A549 (cell line): ENCODE measurements at regions of chr3 and their contacts with region 1.

Region 1: DNA sequence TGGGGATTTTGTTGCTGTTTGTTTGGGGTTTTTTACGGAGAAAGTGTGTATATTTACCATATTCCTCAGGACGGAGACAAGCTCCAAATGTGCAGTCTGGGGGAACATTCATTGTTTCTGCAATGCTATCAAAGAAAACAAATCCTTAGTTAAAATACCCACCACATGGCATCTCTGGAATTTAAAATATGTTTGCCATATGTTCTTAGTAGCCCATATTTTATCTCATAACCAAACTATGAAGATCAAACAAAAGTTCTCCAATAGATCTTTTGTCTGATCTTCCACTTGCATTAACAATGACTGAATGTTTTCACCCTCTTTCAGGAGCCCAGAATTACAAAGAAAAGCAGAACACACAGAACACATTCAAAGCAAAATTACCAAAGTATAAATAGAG is 35.3 kb downstream of the EFHB start:
- DNase-seq: no peak
- ATAC-seq: peak; percentile 36 to 74; a peak in 3 of 6 replicates
- H3K4me3 ChIP-seq: peak overlapping the region; percentile 8; the same call in 1 of the 3 replicates
- H3K27ac ChIP-seq: peak overlapping the region; percentile 69 to 81
- H3K4me1 ChIP-seq: peaks cover 43% of the 10 kb centered on the region
- CTCF ChIP-seq: no peak
- EP300 ChIP-seq: peak in 1 of 2 experiments; percentile 34; a peak in 1 of 5 replicates
- POLR2A ChIP-seq: no peak
- RAD21 ChIP-seq: peak in 1 of 2 experiments; percentile 12; a peak in 1 of 5 replicates

Region 2: DNA sequence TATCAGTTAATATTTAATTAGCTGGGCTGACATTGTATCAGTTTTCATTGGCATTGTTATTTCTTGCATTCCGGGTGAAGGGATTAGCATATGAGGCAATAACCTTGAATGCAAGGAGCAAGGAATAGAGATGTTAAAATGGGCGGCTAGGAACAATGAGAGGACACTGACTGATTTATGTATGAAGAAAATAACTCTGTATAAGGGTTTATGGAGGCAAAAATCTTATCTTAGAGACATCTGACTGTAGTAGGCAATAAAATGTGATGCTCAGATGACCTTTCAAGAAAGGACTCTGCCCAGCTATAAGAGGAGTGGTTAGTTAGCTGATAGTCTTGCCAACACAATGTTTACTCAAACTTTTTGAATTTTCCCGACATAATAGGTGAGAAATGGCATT is 123.0 kb before region 1 on chr3:
- CTCF ChIA-PET with region 1: no interaction called
- POLR2A ChIA-PET with region 1: no interaction called
- DNase-seq: no peak
- ATAC-seq: no peak
- H3K4me3 ChIP-seq: no peak overlapping the region
- H3K27ac ChIP-seq: no peak overlapping the region
- H3K4me1 ChIP-seq: no peaks in the 10 kb centered on the region
- CTCF ChIP-seq: no peak
- EP300 ChIP-seq: no peak
- POLR2A ChIP-seq: no peak
- RAD21 ChIP-seq: no peak

Region 3: DNA sequence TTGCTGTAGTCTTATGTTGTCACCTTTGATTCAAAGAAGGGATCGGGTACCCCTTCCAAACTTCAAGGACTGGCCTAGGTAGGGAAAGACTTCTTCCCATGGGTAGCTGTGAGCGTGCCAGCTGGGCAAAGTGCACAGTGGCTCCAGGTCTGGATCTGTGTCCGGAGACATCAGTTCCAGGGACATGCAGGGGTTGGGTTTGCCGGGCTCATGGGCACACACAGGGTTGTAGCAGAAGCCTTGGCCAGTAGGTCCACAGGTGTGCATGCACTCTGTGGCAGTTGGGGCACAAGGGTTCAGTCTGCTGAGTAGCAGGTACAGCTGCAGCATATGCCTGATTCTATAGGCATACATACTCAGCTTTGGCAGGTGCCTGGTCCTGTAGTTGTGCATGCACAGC is 75.9 kb before region 1 on chr3:
- CTCF ChIA-PET with region 1: no interaction called
- POLR2A ChIA-PET with region 1: no interaction called
- DNase-seq: no peak
- ATAC-seq: no peak
- H3K4me3 ChIP-seq: no peak overlapping the region
- H3K27ac ChIP-seq: no peak overlapping the region
- H3K4me1 ChIP-seq: no peaks in the 10 kb centered on the region
- CTCF ChIP-seq: no peak
- EP300 ChIP-seq: no peak
- POLR2A ChIP-seq: no peak
- RAD21 ChIP-seq: no peak

Region 4: GRCh38 chr3:19888428-19889152 is 10.1 kb before region 1 on chr3:
- CTCF ChIA-PET with region 1: interaction called, 12 read pairs
- POLR2A ChIA-PET with region 1: interaction called, 12 read pairs
- DNase-seq: peak in 1 of 2 experiments; percentile 19
- ATAC-seq: peak; percentile 17 to 35; a peak in 5 of 6 replicates
- H3K4me3 ChIP-seq: peak overlapping the region; percentile 17; the same call in 2 of the 3 replicates
- H3K27ac ChIP-seq: peak overlapping the region; percentile 91
- H3K4me1 ChIP-seq: peaks cover 54% of the 10 kb centered on the region
- CTCF ChIP-seq: no peak
- EP300 ChIP-seq: no peak
- POLR2A ChIP-seq: no peak
- RAD21 ChIP-seq: no peak